ENCODE measurements at regions of chr17 and their contacts with region 1.

Region 1: GRCh38 chr17:1648963-1649843 is 463 bp downstream of the RILP start:
- DNase-seq: peak; percentile 93
- ATAC-seq: peak; percentile 69
- H3K4me3 Mint-ChIP-seq: peak overlapping the region; percentile 69
- H3K27ac Mint-ChIP-seq: no peak overlapping the region
- H3K4me1 Mint-ChIP-seq: peaks cover 41% of the 10 kb centered on the region
- H3K27me3 Mint-ChIP-seq: no peaks in the 10 kb centered on the region
- CTCF ChIP-seq: no peak

Region 2: GRCh38 chr17:1260086-1260769 is 389.0 kb before region 1 on chr17:
- CTCF ChIA-PET with region 1: interaction called, 4 read pairs
- POLR2A ChIA-PET with region 1: interaction called, 4 read pairs
- intact Hi-C with region 1: loop called (anchors 1 kb)
- DNase-seq: no peak
- ATAC-seq: no peak
- H3K4me3 Mint-ChIP-seq: peak overlapping the region; percentile 41
- H3K27ac Mint-ChIP-seq: no peak overlapping the region
- H3K4me1 Mint-ChIP-seq: peaks cover 16% of the 10 kb centered on the region
- H3K27me3 Mint-ChIP-seq: peaks cover 16% of the 10 kb centered on the region
- CTCF ChIP-seq: no peak

Region 3: GRCh38 chr17:1351971-1352370 is 297.2 kb before region 1 on chr17:
- CTCF ChIA-PET with region 1: no interaction called
- POLR2A ChIA-PET with region 1: no interaction called
- intact Hi-C with region 1: no loop called
- DNase-seq: no peak
- ATAC-seq: no peak
- H3K4me3 Mint-ChIP-seq: no peak overlapping the region
- H3K27ac Mint-ChIP-seq: no peak overlapping the region
- H3K4me1 Mint-ChIP-seq: peaks cover 6% of the 10 kb centered on the region
- H3K27me3 Mint-ChIP-seq: no peaks in the 10 kb centered on the region
- CTCF ChIP-seq: no peak

Region 4: DNA sequence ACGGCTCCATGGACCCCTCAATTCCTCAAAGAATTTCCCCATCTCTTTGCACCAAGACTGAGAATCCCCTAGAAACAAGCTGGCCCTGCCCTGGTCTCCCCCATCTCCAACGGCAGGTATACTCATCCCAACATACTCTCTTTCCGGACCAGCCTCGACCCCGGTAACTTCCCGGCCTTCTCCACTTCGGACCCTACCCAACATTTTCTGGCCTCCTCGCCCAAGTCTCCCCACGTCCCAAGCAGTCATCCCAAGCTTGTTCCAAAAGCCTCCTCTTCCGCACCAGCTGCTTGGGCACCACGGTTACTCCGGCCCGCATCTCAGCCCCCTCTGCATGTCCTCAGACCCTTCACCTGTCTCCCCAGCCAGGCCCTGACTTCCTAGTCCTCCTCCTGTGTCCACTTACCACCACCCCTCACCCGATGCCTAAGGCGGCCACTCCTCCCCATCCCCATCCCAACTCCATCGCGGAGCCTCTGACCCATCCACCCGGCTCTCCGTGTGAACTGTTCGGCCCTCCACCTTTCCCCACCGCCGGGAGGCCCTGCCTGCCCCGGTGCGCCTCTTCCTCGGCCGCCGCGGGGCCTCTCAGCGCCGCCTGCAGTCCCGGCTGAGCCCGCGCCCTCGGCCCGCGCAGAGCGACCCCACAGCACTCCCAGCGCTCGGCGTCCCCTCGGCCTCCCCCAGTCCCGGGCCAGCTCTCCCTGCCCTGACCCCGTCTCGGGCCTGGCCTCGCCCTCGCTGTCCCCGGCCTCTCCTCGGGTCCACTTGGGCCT is 87.6 kb before region 1 on chr17:
- CTCF ChIA-PET with region 1: no interaction called
- POLR2A ChIA-PET with region 1: interaction called, 5 read pairs
- intact Hi-C with region 1: loop called (anchors 1 kb)
- DNase-seq: peak; percentile 54
- ATAC-seq: peak; percentile 26
- H3K4me3 Mint-ChIP-seq: peak overlapping the region; percentile 86
- H3K27ac Mint-ChIP-seq: peak overlapping the region; percentile 71
- H3K4me1 Mint-ChIP-seq: peaks cover 52% of the 10 kb centered on the region
- H3K27me3 Mint-ChIP-seq: no peaks in the 10 kb centered on the region
- CTCF ChIP-seq: no peak

Region 5: GRCh38 chr17:1590031-1590748 is 59.0 kb before region 1 on chr17:
- CTCF ChIA-PET with region 1: interaction called, 5 read pairs
- POLR2A ChIA-PET with region 1: interaction called, 12 read pairs
- intact Hi-C with region 1: loop called (anchors 1 kb)
- DNase-seq: no peak
- ATAC-seq: no peak
- H3K4me3 Mint-ChIP-seq: no peak overlapping the region
- H3K27ac Mint-ChIP-seq: peak overlapping the region; percentile 46
- H3K4me1 Mint-ChIP-seq: peaks cover 48% of the 10 kb centered on the region
- H3K27me3 Mint-ChIP-seq: no peaks in the 10 kb centered on the region
- CTCF ChIP-seq: no peak

Region 6: GRCh38 chr17:1673041-1673785 is 24.0 kb after region 1 on chr17:
- CTCF ChIA-PET with region 1: interaction called, 9 read pairs
- POLR2A ChIA-PET with region 1: interaction called, 4 read pairs
- intact Hi-C with region 1: loop called (anchors 1 kb)
- DNase-seq: no peak
- ATAC-seq: no peak
- H3K4me3 Mint-ChIP-seq: no peak overlapping the region
- H3K27ac Mint-ChIP-seq: no peak overlapping the region
- H3K4me1 Mint-ChIP-seq: no peaks in the 10 kb centered on the region
- H3K27me3 Mint-ChIP-seq: no peaks in the 10 kb centered on the region
- CTCF ChIP-seq: no peak

Region 7: GRCh38 chr17:1693339-1693738 is 44.1 kb after region 1 on chr17:
- CTCF ChIA-PET with region 1: no interaction called
- POLR2A ChIA-PET with region 1: no interaction called
- intact Hi-C with region 1: no loop called
- DNase-seq: no peak
- ATAC-seq: no peak
- H3K4me3 Mint-ChIP-seq: no peak overlapping the region
- H3K27ac Mint-ChIP-seq: no peak overlapping the region
- H3K4me1 Mint-ChIP-seq: no peaks in the 10 kb centered on the region
- H3K27me3 Mint-ChIP-seq: peaks cover 7% of the 10 kb centered on the region
- CTCF ChIP-seq: no peak

Region 8: GRCh38 chr17:1724506-1725362 is 75.5 kb after region 1 on chr17 and contains the start of gene WDR81:
- CTCF ChIA-PET with region 1: no interaction called
- POLR2A ChIA-PET with region 1: interaction called, 18 read pairs
- intact Hi-C with region 1: no loop called
- DNase-seq: peak; percentile 85
- ATAC-seq: peak; percentile 55
- H3K4me3 Mint-ChIP-seq: peak within 1 kb of the TSS; percentile 78
- H3K27ac Mint-ChIP-seq: peak within 1 kb of the TSS; percentile 85
- H3K4me1 Mint-ChIP-seq: peaks cover 63% of the 10 kb centered on the region
- H3K27me3 Mint-ChIP-seq: no peaks in the 10 kb centered on the region
- CTCF ChIP-seq: no peak
- total RNA-seq, gene WDR81: 42.7 and 48.4 TPM in 2 replicates

Region 9: DNA sequence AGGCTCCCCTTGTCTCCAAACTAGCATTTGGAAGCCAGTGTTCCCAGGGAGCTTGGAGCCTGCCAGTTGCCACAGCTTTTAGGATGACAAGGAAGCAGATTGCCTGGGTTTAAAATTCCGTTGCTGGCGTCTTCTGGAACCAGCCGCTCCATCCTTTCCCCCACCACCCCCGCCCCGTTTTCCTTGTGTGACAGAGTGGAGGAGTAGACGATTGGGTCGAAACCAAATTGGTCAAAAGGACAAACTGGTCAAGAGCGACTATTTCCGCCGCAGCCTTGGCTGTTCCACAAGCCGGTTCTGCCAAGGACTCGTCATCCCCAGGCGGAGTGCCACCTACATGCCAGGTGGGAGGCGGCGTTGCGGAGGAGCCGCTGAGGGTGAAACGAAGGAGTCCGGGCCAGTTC is 271.7 kb after region 1 on chr17:
- CTCF ChIA-PET with region 1: no interaction called
- POLR2A ChIA-PET with region 1: no interaction called
- intact Hi-C with region 1: no loop called
- DNase-seq: no peak
- ATAC-seq: no peak
- H3K4me3 Mint-ChIP-seq: no peak overlapping the region
- H3K27ac Mint-ChIP-seq: no peak overlapping the region
- H3K4me1 Mint-ChIP-seq: peaks cover 2% of the 10 kb centered on the region
- H3K27me3 Mint-ChIP-seq: no peaks in the 10 kb centered on the region
- CTCF ChIP-seq: no peak

Region 10: GRCh38 chr17:2058586-2059546 is 409.7 kb after region 1 on chr17:
- CTCF ChIA-PET with region 1: no interaction called
- POLR2A ChIA-PET with region 1: no interaction called
- intact Hi-C with region 1: no loop called
- DNase-seq: peak; percentile 74
- ATAC-seq: peak; percentile 29
- H3K4me3 Mint-ChIP-seq: peak overlapping the region; percentile 69
- H3K27ac Mint-ChIP-seq: no peak overlapping the region
- H3K4me1 Mint-ChIP-seq: peaks cover 38% of the 10 kb centered on the region
- H3K27me3 Mint-ChIP-seq: no peaks in the 10 kb centered on the region
- CTCF ChIP-seq: peak; percentile 49